HepG2 (cell line): ENCODE measurements at regions of chr17 and their contacts with region 1.

Region 1: GRCh38 chr17:50094753-50095619 is at the start of gene PDK2:
- DNase-seq: peak; percentile 95
- ATAC-seq: peak; percentile 96
- H3K4me3 ChIP-seq: peak within 1 kb of the TSS; percentile 84 to 88 (median 87)
- H3K27ac ChIP-seq: peak within 1 kb of the TSS; percentile 67
- H3K4me1 ChIP-seq: peaks cover 21% of the 10 kb centered on the region
- H3K27me3 ChIP-seq: peaks cover 3 to 20% of the 10 kb centered on the region in 2 experiments; a peak in 4 of 5 replicates
- CTCF ChIP-seq: no peak
- EP300 ChIP-seq: no peak; a peak in 1 of 4 replicates
- POLR2A ChIP-seq: peak; percentile 58 to 65
- RAD21 ChIP-seq: no peak; the same call in 1 of the 2 replicates
- total RNA-seq, gene PDK2: 18.5 and 19.2 TPM in 2 replicates

Region 2: GRCh38 chr17:49656247-49656646 is 438.7 kb before region 1 on chr17:
- CTCF ChIA-PET with region 1: no interaction called
- POLR2A ChIA-PET with region 1: no interaction called
- in situ Hi-C with region 1: no loop called
- intact Hi-C with region 1: no loop called
- DNase-seq: no peak
- ATAC-seq: no peak
- H3K4me3 ChIP-seq: no peak overlapping the region
- H3K27ac ChIP-seq: no peak overlapping the region
- H3K4me1 ChIP-seq: no peaks in the 10 kb centered on the region
- H3K27me3 ChIP-seq: no peaks in the 10 kb centered on the region
- CTCF ChIP-seq: no peak
- EP300 ChIP-seq: no peak
- POLR2A ChIP-seq: no peak
- RAD21 ChIP-seq: no peak

Region 3: GRCh38 chr17:49788478-49789242 is 306.3 kb before region 1 on chr17 and contains the start of gene KAT7:
- CTCF ChIA-PET with region 1: no interaction called
- POLR2A ChIA-PET with region 1: no interaction called
- in situ Hi-C with region 1: no loop called
- intact Hi-C with region 1: no loop called
- DNase-seq: peak; percentile 99
- ATAC-seq: peak; percentile 98
- H3K4me3 ChIP-seq: peak within 1 kb of the TSS; percentile 82 to 100 (median 97)
- H3K27ac ChIP-seq: peak within 1 kb of the TSS; percentile 98
- H3K4me1 ChIP-seq: peaks cover 26% of the 10 kb centered on the region
- H3K27me3 ChIP-seq: no peaks in the 10 kb centered on the region
- CTCF ChIP-seq: no peak; the same call in 1 of the 2 replicates
- EP300 ChIP-seq: no peak; a peak in 1 of 4 replicates
- POLR2A ChIP-seq: peak; percentile 94 to 99
- RAD21 ChIP-seq: peak; percentile 47; the same call in 1 of the 2 replicates
- total RNA-seq, gene KAT7: 39.2 and 43.8 TPM in 2 replicates

Region 4: GRCh38 chr17:50133028-50133768 is 38.2 kb after region 1 on chr17:
- CTCF ChIA-PET with region 1: no interaction called
- POLR2A ChIA-PET with region 1: interaction called, 3 read pairs
- in situ Hi-C with region 1: no loop called
- intact Hi-C with region 1: loop called (anchors 2 kb)
- DNase-seq: peak; percentile 88
- ATAC-seq: peak; percentile 81
- H3K4me3 ChIP-seq: peak overlapping the region in 1 of 3 experiments; percentile 11; a peak in 2 of 6 replicates
- H3K27ac ChIP-seq: peak overlapping the region; percentile 52
- H3K4me1 ChIP-seq: peaks cover 53% of the 10 kb centered on the region
- H3K27me3 ChIP-seq: peaks cover 6 to 14% of the 10 kb centered on the region in 2 experiments
- CTCF ChIP-seq: no peak
- EP300 ChIP-seq: peak; percentile 67; a peak in 2 of 4 replicates
- POLR2A ChIP-seq: peak in 1 of 2 experiments; percentile 53; a peak in 2 of 4 replicates
- RAD21 ChIP-seq: no peak; the same call in 1 of the 2 replicates

Region 5: GRCh38 chr17:50289991-50290702 is 195.2 kb after region 1 on chr17:
- CTCF ChIA-PET with region 1: no interaction called
- POLR2A ChIA-PET with region 1: no interaction called
- in situ Hi-C with region 1: no loop called
- intact Hi-C with region 1: no loop called
- DNase-seq: no peak
- ATAC-seq: peak; percentile 59; the same call in 2 of the 3 replicates
- H3K4me3 ChIP-seq: no peak overlapping the region
- H3K27ac ChIP-seq: no peak overlapping the region
- H3K4me1 ChIP-seq: peaks cover 10% of the 10 kb centered on the region; the same call in 1 of the 2 replicates
- H3K27me3 ChIP-seq: peaks cover 2 to 14% of the 10 kb centered on the region in 2 experiments; a peak in 3 of 5 replicates
- CTCF ChIP-seq: no peak
- EP300 ChIP-seq: no peak
- POLR2A ChIP-seq: no peak
- RAD21 ChIP-seq: no peak

Region 6: DNA sequence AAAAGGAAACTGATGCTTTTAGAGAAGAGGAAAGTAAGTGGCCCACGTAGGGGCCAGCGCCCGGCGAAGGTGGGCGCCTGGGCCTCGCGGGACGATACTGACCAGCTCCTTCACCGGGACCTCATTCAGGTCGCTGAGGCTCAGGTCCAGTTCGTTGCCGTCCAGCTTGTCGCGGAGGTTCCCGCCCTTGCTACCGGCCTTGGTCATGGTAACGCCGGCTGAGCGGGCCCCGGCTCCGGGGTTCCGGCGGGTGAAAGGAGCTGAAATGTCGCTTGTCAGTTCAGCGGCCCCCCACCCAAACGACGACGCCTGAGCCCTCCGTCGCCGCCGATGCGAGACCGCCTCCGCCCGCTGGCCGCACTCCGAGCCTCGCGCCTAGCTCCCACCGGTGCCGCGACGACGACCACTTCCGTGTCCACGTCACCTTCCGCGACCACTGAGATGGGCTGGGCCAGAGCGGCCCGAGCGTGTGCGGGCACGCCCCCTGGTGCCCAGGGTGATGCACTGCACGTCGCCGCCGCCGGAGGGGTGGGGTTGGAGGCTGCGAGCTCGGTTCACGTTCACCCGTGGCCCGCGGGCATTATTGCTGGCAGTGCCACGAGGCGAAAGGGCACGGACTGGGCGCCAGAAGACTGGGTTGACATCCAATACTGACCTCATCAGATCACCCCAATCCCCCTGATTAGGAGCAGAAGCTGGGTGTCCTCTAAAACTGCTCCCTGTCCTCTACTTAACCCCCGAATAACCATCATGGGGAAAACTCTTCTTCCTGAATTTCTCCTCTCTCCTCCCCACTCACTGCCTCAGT is 302.3 kb after region 1 on chr17 and contains the start of gene LRRC59:
- CTCF ChIA-PET with region 1: no interaction called
- POLR2A ChIA-PET with region 1: no interaction called
- in situ Hi-C with region 1: no loop called
- intact Hi-C with region 1: no loop called
- DNase-seq: peak; percentile 81
- ATAC-seq: peak; percentile 93
- H3K4me3 ChIP-seq: peak within 1 kb of the TSS; percentile 73 to 99 (median 99)
- H3K27ac ChIP-seq: peak within 1 kb of the TSS; percentile 85
- H3K4me1 ChIP-seq: peaks cover 27% of the 10 kb centered on the region
- H3K27me3 ChIP-seq: peaks cover 0 to 3% of the 10 kb centered on the region in 2 experiments; a peak in 1 of 5 replicates
- CTCF ChIP-seq: peak; percentile 100
- EP300 ChIP-seq: peak; percentile 56 to 73; a peak in 3 of 4 replicates
- POLR2A ChIP-seq: peak; percentile 91 to 96
- RAD21 ChIP-seq: peak; percentile 92
- total RNA-seq, gene LRRC59: 222 and 239 TPM in 2 replicates